MCF 10A (cell line): ENCODE measurements at regions of chr10 and their contacts with region 1.

Region 1: DNA sequence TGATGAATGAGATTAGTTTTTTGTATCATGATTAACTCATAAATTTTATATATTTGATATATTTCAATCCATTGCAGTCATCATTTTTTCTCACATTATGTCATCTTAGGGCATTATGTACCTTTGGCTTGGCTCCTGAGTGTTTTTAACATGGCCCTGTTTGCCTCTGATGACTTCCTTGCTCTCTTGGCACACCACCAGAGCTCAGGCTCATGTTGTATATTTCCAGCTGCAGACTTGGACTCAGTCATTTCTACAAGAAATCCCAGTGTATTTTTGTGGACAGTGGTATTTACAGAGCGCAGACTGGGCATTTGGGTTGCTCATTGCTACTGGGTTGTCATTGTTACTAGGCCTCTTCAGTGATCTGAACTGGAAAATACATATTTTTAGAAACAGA is 188.5 kb downstream of the ADRA2A start:
- DNase-seq: no peak
- H3K4me3 Mint-ChIP-seq: no peak overlapping the region
- H3K27ac Mint-ChIP-seq: no peak overlapping the region
- H3K4me1 Mint-ChIP-seq: no peaks in the 10 kb centered on the region
- H3K27me3 Mint-ChIP-seq: peaks cover 72% of the 10 kb centered on the region
- CTCF ChIP-seq: no peak

Region 2: GRCh38 chr10:110893559-110894179 is 371.7 kb before region 1 on chr10:
- CTCF ChIA-PET with region 1: no interaction called
- POLR2A ChIA-PET with region 1: no interaction called
- intact Hi-C with region 1: loop called (anchors 5 kb)
- DNase-seq: peak; percentile 54
- H3K4me3 Mint-ChIP-seq: no peak overlapping the region
- H3K27ac Mint-ChIP-seq: no peak overlapping the region
- H3K4me1 Mint-ChIP-seq: peaks cover 16% of the 10 kb centered on the region
- H3K27me3 Mint-ChIP-seq: no peaks in the 10 kb centered on the region
- CTCF ChIP-seq: peak; percentile 52

Region 3: GRCh38 chr10:110944792-110945396 is 320.4 kb before region 1 on chr10:
- CTCF ChIA-PET with region 1: no interaction called
- POLR2A ChIA-PET with region 1: no interaction called
- intact Hi-C with region 1: no loop called
- DNase-seq: peak; percentile 60
- H3K4me3 Mint-ChIP-seq: no peak overlapping the region
- H3K27ac Mint-ChIP-seq: peak overlapping the region; percentile 49
- H3K4me1 Mint-ChIP-seq: peaks cover 21% of the 10 kb centered on the region
- H3K27me3 Mint-ChIP-seq: no peaks in the 10 kb centered on the region
- CTCF ChIP-seq: no peak